Astrocyte of the cerebellum (primary cell): ENCODE measurements at regions of chr2 and their contacts with region 1.

Region 1: GRCh38 chr2:119174216-119175037 is 15.9 kb upstream of the C1QL2 start:
- DNase-seq: no peak
- H3K4me3 ChIP-seq: no peak overlapping the region
- CTCF ChIP-seq: peak; percentile 65

Region 2: DNA sequence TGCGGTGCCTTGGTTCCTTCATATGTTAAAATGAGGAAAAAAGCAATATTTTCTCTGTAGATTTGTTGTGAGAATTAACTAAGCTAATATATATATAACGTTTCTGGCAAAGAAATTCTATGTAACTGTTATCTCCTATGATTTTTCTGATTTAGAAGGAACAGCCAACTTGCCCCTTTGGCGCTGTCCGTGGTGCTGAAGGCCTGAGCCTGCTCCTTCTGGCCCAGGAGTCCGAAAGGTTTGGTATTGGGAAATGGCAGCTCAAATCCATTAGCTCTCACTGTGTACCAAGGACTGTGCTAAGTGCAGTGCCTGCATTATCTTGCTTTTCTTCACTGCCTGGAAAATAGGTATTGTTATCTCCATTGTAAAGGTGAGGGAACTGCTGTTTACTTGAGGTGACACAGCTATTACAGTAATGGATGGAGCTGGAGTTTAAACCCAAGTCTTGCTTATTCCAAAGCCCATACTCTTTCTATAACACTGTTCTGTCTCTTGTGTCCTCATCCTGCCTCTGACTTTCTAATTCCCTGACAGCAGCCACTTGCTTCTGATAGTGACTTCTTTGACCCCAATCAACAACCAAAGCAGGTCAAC is 68.0 kb before region 1 on chr2:
- in situ Hi-C with region 1: loop called (anchors 5 kb)
- DNase-seq: peak; percentile 26
- H3K4me3 ChIP-seq: no peak overlapping the region
- CTCF ChIP-seq: no peak

Region 3: GRCh38 chr2:119531292-119531691 is 356.9 kb after region 1 on chr2:
- in situ Hi-C with region 1: no loop called
- DNase-seq: no peak
- H3K4me3 ChIP-seq: no peak overlapping the region
- CTCF ChIP-seq: no peak